A549 (cell line): ENCODE measurements at regions of chr3 and their contacts with region 1.

Region 1: GRCh38 chr3:10286596-10287330 is 6.0 kb downstream of the GHRL start:
- DNase-seq: peak; percentile 72 to 78
- ATAC-seq: peak; percentile 76 to 80
- H3K4me3 ChIP-seq: no peak overlapping the region
- H3K27ac ChIP-seq: peak overlapping the region in 1 of 2 experiments; percentile 27; a peak in 2 of 6 replicates
- H3K4me1 ChIP-seq: no peaks in the 10 kb centered on the region
- CTCF ChIP-seq: peak; percentile 64
- EP300 ChIP-seq: no peak
- POLR2A ChIP-seq: no peak
- RAD21 ChIP-seq: peak; percentile 68 to 69

Region 2: DNA sequence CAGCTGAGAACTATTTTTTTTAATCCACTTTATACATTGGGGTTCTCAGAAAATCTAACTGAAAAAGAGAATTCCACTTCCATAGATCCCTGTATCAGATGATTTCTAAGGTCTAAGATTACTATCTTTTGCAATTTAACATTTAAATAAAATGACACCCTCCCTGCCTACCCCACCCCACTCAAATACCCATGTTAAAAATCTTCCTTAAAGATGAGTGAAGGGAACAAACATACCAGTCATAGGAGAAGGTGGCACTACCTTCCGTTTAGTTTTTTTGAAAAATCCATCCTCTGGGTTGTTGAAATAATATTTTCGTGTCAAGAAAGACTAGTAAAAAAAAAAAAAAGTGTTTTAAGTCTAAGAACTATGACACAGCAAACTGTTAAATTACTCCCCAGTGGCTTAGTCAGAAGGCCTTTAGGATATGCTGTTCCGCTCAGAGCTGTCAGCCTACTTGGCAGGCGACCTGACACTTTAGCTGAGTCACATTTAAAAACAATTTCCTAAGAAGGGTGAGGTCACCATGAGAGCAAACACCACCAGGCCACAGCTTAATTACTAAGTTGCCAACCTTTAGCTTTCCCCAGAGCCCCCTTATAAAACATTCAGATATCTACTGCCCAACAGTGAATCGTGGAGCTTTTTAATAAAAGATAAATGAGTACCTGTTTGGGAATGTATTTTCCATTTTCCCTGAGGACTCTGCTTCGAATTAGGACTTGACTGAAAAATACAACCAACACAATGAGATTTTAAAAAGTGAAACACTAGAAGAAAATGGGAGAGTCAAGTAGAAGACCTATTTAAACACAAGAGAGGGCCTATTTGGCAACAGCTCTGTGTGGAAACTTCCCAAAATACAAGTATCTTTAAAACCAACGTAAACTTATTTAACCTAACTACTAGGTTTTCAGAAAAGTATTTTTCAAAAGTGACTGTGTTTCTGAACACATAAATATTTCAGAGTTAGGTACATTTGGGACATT is 309.7 kb before region 1 on chr3:
- CTCF ChIA-PET with region 1: interaction called, 5 read pairs
- POLR2A ChIA-PET with region 1: interaction called, 11 read pairs
- DNase-seq: peak; percentile 63 to 93
- ATAC-seq: peak; percentile 95 to 97
- H3K4me3 ChIP-seq: peak overlapping the region; percentile 11; the same call in 2 of the 3 replicates
- H3K27ac ChIP-seq: peak overlapping the region; percentile 79 to 83
- H3K4me1 ChIP-seq: peaks cover 35% of the 10 kb centered on the region
- CTCF ChIP-seq: no peak
- EP300 ChIP-seq: peak in 1 of 2 experiments; percentile 59; a peak in 1 of 5 replicates
- POLR2A ChIP-seq: no peak
- RAD21 ChIP-seq: no peak

Region 3: DNA sequence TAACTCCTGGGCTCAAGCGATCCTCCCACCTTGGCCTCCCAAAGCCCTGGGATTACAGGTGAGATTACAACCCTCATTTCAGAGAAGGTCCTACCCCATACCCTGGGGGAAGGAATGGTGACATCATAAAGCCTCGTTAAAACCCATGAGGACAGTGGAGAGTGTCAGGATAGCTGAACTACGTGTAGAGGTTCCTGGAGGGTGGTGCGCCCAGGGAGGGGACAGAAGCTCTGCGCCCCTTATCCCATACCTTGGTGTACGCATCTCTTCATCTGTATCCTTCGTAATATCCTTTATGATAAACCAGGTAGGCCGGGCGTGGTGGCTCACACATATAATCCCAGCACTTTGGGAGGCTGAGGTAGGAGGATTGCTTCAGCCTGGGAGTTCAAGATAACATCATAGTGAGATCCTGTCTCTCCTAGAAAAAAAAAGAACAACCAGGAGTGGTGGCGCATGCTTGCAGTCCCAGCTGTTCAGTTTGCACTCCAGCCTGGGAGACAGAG is 131.9 kb before region 1 on chr3:
- CTCF ChIA-PET with region 1: no interaction called
- POLR2A ChIA-PET with region 1: no interaction called
- DNase-seq: no peak
- ATAC-seq: peak; percentile 31 to 47; a peak in 3 of 6 replicates
- H3K4me3 ChIP-seq: no peak overlapping the region
- H3K27ac ChIP-seq: no peak overlapping the region
- H3K4me1 ChIP-seq: no peaks in the 10 kb centered on the region
- CTCF ChIP-seq: no peak
- EP300 ChIP-seq: no peak
- POLR2A ChIP-seq: no peak
- RAD21 ChIP-seq: no peak

Region 4: DNA sequence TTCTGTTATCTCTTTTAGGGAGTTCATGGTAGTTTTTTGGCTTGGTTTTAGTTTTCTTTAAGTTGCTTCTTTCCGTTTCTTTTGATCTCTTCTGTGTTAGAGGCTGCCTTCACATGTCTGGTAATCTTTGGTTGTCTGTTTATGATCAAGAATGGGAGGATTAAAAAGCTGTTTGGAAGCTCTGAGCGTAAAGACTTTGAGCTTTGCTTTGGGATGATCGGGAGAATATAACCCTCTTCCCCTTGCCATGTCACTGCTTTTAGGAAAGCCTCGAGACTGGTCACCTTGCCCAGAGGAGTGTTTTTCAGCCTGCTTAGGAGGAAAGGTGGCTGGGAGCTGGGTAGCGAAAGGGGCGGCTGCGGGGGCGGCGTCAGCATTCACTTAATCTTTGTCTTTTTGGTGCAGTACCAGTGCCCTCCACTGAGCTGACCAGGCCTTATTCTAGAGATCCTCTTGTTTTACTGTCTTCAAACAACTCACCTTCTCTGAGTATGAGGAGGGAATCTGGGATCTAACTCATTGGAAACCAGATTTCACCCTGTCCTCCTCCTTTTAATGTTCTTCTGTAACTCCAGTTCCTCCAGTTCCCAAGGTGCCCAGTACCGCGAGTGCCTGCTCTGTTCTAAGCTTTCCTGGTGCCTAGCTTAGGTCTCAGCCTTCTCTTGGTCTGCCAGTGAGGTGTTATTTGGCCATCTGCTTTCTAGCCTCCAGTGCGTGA is 23.0 kb before region 1 on chr3:
- CTCF ChIA-PET with region 1: interaction called, 14 read pairs
- POLR2A ChIA-PET with region 1: interaction called, 3 read pairs
- DNase-seq: peak; percentile 58 to 79
- ATAC-seq: peak; percentile 98 to 99
- H3K4me3 ChIP-seq: no peak overlapping the region
- H3K27ac ChIP-seq: no peak overlapping the region
- H3K4me1 ChIP-seq: 0 out of 3 replicates have a peak, but pooled peaks cover 3% of the 10 kb centered on the region
- CTCF ChIP-seq: peak; percentile 3; the same call in 2 of the 3 replicates
- EP300 ChIP-seq: no peak
- POLR2A ChIP-seq: no peak
- RAD21 ChIP-seq: 0 out of 5 replicates have a peak, but pooled peaks of 1 of the 2 experiments have one; percentile 20

Region 5: GRCh38 chr3:10268930-10269329 is 17.8 kb before region 1 on chr3:
- CTCF ChIA-PET with region 1: interaction called, 15 read pairs
- POLR2A ChIA-PET with region 1: interaction called, 3 read pairs
- DNase-seq: no peak
- ATAC-seq: no peak
- H3K4me3 ChIP-seq: no peak overlapping the region
- H3K27ac ChIP-seq: no peak overlapping the region
- H3K4me1 ChIP-seq: peaks cover 3% of the 10 kb centered on the region; the same call in 1 of the 3 replicates
- CTCF ChIP-seq: no peak
- EP300 ChIP-seq: no peak
- POLR2A ChIP-seq: no peak
- RAD21 ChIP-seq: no peak

Region 6: DNA sequence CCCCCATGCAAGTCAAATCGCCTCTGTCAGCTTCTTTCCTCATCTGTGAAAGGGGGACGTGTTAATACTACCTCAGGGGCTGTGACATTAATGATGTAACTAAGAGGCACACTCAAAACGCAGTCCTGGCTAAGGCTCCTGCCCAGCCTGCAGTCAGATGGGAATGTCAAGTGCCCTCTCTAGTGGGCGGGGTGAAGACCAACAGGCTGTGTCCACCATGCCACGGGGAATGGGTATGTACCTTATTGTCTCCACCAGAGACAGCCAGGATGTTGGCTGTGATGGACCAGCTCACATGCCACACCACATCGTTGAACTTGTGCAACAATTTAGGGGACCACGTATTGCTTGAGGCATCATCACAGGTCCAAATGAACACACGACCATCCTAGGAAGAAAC is 17.0 kb after region 1 on chr3:
- CTCF ChIA-PET with region 1: interaction called, 25 read pairs
- POLR2A ChIA-PET with region 1: no interaction called
- DNase-seq: no peak
- ATAC-seq: peak; percentile 52 to 63; a peak in 5 of 6 replicates
- H3K4me3 ChIP-seq: no peak overlapping the region
- H3K27ac ChIP-seq: no peak overlapping the region
- H3K4me1 ChIP-seq: peaks cover 4% of the 10 kb centered on the region; the same call in 1 of the 3 replicates
- CTCF ChIP-seq: no peak
- EP300 ChIP-seq: no peak
- POLR2A ChIP-seq: no peak
- RAD21 ChIP-seq: no peak